ENCODE measurements at regions of chr17 and their contacts with region 1.

Region 1: GRCh38 chr17:45852535-45853297 is 8.0 kb downstream of the SPPL2C start:
- DNase-seq: peak; percentile 37 to 71 (median 56)
- H3K4me3 ChIP-seq: no peak overlapping the region
- H3K27ac ChIP-seq: no peak overlapping the region
- H3K4me1 ChIP-seq: no peaks in the 10 kb centered on the region
- H3K27me3 ChIP-seq: no peaks in the 10 kb centered on the region
- CTCF ChIP-seq: peak; percentile 44 to 68 (median 61)
- EP300 ChIP-seq: no peak
- POLR2A ChIP-seq: no peak

Region 2: DNA sequence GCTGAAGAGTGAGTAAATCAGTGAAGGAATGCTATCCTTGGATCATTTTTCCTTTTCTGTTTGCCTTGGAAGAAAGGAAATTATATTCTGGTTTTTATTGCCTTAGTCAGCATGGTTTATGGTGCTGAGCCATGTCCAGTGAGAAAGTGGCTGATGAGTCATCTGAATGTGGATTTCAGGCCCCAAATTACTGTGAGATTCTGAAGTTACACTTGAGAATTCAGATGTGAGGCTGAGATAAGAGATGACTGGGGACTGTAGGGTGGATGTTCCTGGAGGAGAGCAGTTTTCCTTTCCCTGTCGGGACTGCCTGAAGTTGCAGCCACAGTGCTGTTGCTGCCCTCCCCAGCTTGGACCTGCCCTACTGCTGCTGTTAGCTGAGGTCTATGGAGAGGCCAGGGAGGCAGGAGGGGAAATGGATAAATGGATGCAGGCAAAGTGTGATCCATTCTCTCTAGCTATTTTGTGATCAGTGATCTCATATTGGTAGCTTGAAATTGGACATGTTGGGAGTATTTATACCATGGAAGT is 531.7 kb before region 1 on chr17:
- intact Hi-C with region 1: no loop called
- DNase-seq: no peak
- H3K4me3 ChIP-seq: no peak overlapping the region
- H3K27ac ChIP-seq: no peak overlapping the region
- H3K4me1 ChIP-seq: no peaks in the 10 kb centered on the region
- H3K27me3 ChIP-seq: no peaks in the 10 kb centered on the region
- CTCF ChIP-seq: no peak
- EP300 ChIP-seq: no peak
- POLR2A ChIP-seq: no peak

Region 3: GRCh38 chr17:45640141-45640850 is 212.4 kb before region 1 on chr17:
- intact Hi-C with region 1: loop called in 1 of 4 experiments (anchors 5 kb)
- DNase-seq: peak; percentile 64 to 78 (median 75)
- H3K4me3 ChIP-seq: no peak overlapping the region
- H3K27ac ChIP-seq: no peak overlapping the region
- H3K4me1 ChIP-seq: no peaks in the 10 kb centered on the region
- H3K27me3 ChIP-seq: no peaks in the 10 kb centered on the region
- CTCF ChIP-seq: peak; percentile 64 to 80 (median 80)
- EP300 ChIP-seq: no peak
- POLR2A ChIP-seq: no peak